Activated T-helper 2 cell treated with anti-CD3 and anti-CD28 coated beads, Interferon-gamma antibody, Interleukin-2, Interleukin-4, amounts not matched to agents 10 μg/mL and 5 μg/mL and 100 μg/mL, durations not matched to agents 14 hours and 24 hours and 36 hours (primary cell): ENCODE measurements at regions of chr13 and their contacts with region 1.

Region 1: GRCh38 chr13:97221989-97222700 is at the start of gene MBNL2:
- DNase-seq: peak; percentile 82
- H3K4me3 Mint-ChIP-seq: peak within 1 kb of the TSS; percentile 91
- H3K27ac Mint-ChIP-seq: peak within 1 kb of the TSS; percentile 87
- H3K4me1 Mint-ChIP-seq: peaks cover 46% of the 10 kb centered on the region
- H3K27me3 Mint-ChIP-seq: no peaks in the 10 kb centered on the region
- total RNA-seq, gene MBNL2: 27.2 and 28.4 TPM in 2 replicates

Region 2: GRCh38 chr13:97124916-97125809 is 97.0 kb before region 1 on chr13:
- intact Hi-C with region 1: loop called (anchors 5 kb)
- DNase-seq: no peak
- H3K4me3 Mint-ChIP-seq: no peak overlapping the region
- H3K27ac Mint-ChIP-seq: peak overlapping the region; percentile 47
- H3K4me1 Mint-ChIP-seq: peaks cover 27% of the 10 kb centered on the region
- H3K27me3 Mint-ChIP-seq: peaks cover 35% of the 10 kb centered on the region

Region 3: DNA sequence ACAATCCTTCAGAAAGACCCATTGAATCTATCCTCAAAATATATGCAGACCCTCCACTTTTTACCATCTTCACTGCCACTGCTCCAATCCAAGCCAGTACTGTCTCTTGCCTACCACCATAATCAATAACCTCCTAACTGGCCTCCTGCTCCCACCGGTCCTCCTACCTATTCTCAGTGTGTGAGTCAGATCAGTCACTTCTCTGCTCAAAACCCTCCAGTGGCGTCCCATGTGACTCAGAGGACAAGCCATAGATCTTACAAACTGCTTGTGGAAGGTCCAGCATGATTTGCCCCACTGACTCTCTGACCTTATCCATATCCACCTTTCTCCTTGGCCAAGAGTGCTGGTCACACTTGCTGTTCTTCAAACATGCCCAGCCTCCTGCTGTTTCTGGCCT is 23.4 kb before region 1 on chr13:
- intact Hi-C with region 1: no loop called
- DNase-seq: no peak
- H3K4me3 Mint-ChIP-seq: no peak overlapping the region
- H3K27ac Mint-ChIP-seq: no peak overlapping the region
- H3K4me1 Mint-ChIP-seq: peaks cover 8% of the 10 kb centered on the region
- H3K27me3 Mint-ChIP-seq: peaks cover 20% of the 10 kb centered on the region

Region 4: DNA sequence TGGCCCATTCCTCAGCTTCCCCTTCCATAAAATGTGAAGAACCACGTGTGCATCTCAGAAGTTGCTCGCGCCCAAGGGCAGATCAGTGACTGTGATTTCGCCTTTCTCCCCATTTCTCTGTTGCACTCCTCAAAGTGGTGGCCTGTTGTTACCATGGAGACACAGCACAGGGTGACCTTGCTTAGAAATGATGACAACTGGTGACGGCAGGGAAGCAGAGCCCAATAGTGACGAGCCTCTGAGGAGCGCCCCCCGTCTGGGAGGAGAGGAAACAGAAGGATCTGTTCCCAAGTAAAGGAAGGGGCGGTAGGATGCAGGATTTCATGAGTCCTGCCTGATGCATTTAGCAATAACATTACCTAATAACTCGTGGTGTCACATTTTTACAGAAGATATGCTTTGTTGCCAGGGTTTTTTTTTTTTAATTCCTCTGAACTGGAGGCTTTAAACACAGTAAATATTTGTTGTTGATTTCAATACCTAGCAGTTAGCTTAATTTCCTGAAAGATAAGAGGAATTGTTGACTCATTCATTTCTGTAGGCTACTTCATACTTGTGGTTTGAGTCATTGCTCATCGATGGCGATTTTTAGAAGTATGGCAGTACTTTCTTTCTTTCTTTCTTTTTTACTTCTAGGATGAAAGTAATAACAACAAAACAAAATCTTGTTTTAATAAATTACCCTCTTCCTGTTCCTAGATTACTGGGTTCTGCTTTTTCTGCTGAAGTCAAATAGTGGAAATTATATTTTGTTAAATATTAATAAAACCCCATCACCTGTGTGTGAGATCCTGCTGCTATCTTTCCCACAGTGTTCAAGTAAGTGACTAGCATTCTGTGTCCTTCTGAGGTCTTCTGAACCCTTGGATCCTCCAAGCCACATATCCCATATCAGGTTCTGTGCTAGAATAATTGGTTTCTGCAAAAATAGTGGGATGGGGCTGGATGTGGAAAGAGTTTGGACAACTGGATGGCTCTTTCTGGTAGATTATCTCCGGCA is 36.0 kb after region 1 on chr13:
- intact Hi-C with region 1: loop called (anchors 1 kb)
- DNase-seq: no peak
- H3K4me3 Mint-ChIP-seq: peak overlapping the region; percentile 41
- H3K27ac Mint-ChIP-seq: peak overlapping the region; percentile 93
- H3K4me1 Mint-ChIP-seq: peaks cover 80% of the 10 kb centered on the region
- H3K27me3 Mint-ChIP-seq: no peaks in the 10 kb centered on the region

Region 5: DNA sequence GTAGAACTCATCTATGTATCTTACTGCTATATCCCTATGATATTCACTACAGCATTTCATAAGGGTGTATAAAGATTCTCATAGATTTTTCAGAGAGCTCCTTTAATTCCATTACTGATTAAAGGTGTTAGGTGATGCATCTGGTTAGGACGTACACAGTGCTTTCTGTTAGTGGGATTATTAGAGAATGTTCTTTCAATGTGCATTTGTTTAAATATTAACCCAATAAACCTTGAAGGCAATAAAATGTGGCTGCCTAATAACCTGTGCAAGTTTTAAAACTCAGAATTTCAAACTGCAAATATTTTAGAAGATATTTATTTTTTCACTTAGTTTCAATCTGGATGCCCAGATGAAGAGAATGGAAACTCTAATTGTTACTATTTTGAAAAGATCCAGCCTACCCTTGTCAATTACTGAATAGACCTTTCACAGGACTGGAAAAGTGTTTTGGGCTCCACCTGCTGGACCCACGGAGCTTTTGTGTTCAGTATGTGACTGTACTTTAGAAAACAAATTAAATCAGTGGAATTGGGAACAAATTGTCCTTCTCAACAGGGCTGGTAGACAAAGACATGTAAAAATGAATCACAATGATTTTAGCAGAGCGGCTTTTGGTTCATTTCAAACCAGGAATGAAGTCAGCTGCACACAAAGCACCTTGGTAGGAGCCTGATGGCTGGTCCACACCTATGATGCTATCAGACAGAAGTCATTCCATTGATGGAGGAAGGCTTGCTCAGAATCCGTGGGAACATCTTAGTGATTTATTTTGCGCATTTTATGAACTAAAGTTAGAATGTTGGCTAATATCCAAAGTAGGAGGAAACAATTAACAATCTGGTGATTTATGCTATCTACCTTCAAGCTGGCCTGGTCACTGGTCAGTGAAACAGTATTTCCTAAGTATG is 122.4 kb after region 1 on chr13:
- intact Hi-C with region 1: loop called (anchors 5 kb)
- DNase-seq: no peak
- H3K4me3 Mint-ChIP-seq: no peak overlapping the region
- H3K27ac Mint-ChIP-seq: no peak overlapping the region
- H3K4me1 Mint-ChIP-seq: peaks cover 3% of the 10 kb centered on the region
- H3K27me3 Mint-ChIP-seq: no peaks in the 10 kb centered on the region

Region 6: GRCh38 chr13:97386801-97387484 is 164.8 kb after region 1 on chr13:
- intact Hi-C with region 1: no loop called
- DNase-seq: no peak
- H3K4me3 Mint-ChIP-seq: no peak overlapping the region
- H3K27ac Mint-ChIP-seq: no peak overlapping the region
- H3K4me1 Mint-ChIP-seq: peaks cover 14% of the 10 kb centered on the region
- H3K27me3 Mint-ChIP-seq: no peaks in the 10 kb centered on the region

Region 7: GRCh38 chr13:97743938-97744337 is 521.8 kb after region 1 on chr13:
- intact Hi-C with region 1: no loop called
- DNase-seq: no peak
- H3K4me3 Mint-ChIP-seq: no peak overlapping the region
- H3K27ac Mint-ChIP-seq: no peak overlapping the region
- H3K4me1 Mint-ChIP-seq: no peaks in the 10 kb centered on the region
- H3K27me3 Mint-ChIP-seq: no peaks in the 10 kb centered on the region

Region 8: GRCh38 chr13:99041788-99042187 is 1819.6 kb after region 1 on chr13:
- intact Hi-C with region 1: loop called (anchors 10 kb)
- DNase-seq: no peak
- H3K4me3 Mint-ChIP-seq: no peak overlapping the region
- H3K27ac Mint-ChIP-seq: no peak overlapping the region
- H3K4me1 Mint-ChIP-seq: peaks cover 66% of the 10 kb centered on the region
- H3K27me3 Mint-ChIP-seq: no peaks in the 10 kb centered on the region